H1 (cell line): ENCODE measurements at regions of chr1 and their contacts with region 1.

Region 1: DNA sequence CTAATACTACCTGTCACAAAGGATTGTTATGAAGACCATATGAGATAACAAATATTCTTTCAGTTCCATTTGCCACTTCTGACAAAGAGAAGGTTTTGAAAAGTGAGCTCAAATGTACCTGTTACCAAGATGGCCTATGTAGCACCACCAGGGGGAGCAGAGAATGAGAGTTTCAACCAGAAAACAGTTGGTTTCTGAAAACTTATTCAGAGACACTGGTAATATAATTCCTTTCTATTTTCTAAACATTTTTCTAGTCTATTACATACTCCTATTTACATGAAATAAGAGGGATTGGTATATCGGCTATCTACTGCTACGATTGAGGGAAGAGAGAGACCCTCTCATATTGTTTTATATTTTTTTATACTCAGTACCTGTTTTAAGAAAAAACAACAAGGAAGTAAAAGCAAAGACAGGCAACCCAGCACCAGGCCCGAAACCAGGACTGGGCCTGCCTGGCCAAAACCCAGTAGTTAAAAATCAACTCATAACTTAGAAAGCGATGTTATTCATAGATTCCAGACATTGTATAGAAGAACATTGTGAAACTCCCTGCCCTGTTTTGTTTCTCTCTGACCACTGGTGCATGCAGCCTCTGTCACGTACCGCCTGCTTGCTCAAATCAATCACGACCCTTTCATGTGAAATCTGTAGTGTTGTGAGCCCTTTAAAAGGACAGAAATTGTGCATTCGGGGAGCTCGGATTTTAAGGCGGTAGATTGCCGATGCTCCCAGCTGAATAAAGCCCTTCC is 48.3 kb downstream of the IL23R start:
- DNase-seq: no peak
- H3K4me3 ChIP-seq: no peak overlapping the region
- H3K27ac ChIP-seq: no peak overlapping the region
- H3K4me1 ChIP-seq: peaks cover 0 to 2% (median 0%) of the 10 kb centered on the region in 4 experiments; a peak in 1 of 7 replicates
- H3K27me3 ChIP-seq: no peaks in the 10 kb centered on the region
- CTCF ChIP-seq: peak in 2 of 3 experiments; percentile 64 to 69; a peak in 3 of 4 replicates
- EP300 ChIP-seq: no peak
- POLR2A ChIP-seq: no peak
- RAD21 ChIP-seq: peak; percentile 37 to 61

Region 2: DNA sequence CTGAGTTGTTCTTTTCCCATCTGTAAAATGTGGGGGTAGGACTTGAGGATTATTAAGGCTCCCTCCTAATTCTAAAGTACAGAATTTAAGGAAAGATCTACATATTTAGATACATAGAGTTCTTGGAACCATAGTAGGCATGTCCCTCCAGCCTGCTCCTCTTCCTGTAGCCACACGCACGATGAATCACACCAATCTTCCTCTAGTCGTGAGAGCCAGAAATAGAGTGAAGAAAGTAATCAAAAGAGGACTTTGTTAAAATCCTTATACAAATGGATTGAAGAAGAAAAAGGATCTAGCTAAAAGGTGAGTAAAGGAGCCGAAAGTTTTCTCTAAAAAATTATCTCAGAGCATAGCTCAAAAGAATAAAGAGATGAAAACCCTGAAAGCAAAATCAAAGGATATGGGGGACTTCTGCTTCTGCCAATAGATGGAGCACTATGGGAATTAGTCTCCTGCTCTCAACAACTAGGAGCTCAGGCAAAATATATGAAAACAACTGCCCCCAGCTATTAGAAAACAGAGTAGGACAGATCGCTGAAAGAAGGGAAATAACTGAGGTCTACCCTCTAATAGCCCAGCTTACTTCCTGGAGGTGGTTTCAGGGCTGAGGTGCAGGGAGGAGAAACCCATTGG is 88.4 kb before region 1 on chr1:
- CTCF ChIA-PET with region 1: interaction called, 13 read pairs
- POLR2A ChIA-PET with region 1: no interaction called
- DNase-seq: no peak
- H3K4me3 ChIP-seq: no peak overlapping the region
- H3K27ac ChIP-seq: no peak overlapping the region
- H3K4me1 ChIP-seq: no peaks in the 10 kb centered on the region
- H3K27me3 ChIP-seq: no peaks in the 10 kb centered on the region
- CTCF ChIP-seq: peak in 1 of 3 experiments; percentile 1; a peak in 1 of 4 replicates
- EP300 ChIP-seq: no peak
- POLR2A ChIP-seq: no peak
- RAD21 ChIP-seq: peak; percentile 9 to 18; a peak in 1 of 4 replicates

Region 3: GRCh38 chr1:67194209-67194863 is 20.3 kb before region 1 on chr1:
- CTCF ChIA-PET with region 1: interaction called, 52 read pairs
- POLR2A ChIA-PET with region 1: no interaction called
- DNase-seq: no peak
- H3K4me3 ChIP-seq: no peak overlapping the region
- H3K27ac ChIP-seq: no peak overlapping the region
- H3K4me1 ChIP-seq: no peaks in the 10 kb centered on the region
- H3K27me3 ChIP-seq: no peaks in the 10 kb centered on the region
- CTCF ChIP-seq: no peak
- EP300 ChIP-seq: no peak
- POLR2A ChIP-seq: no peak
- RAD21 ChIP-seq: no peak

Region 4: GRCh38 chr1:67261680-67262079 is 47.1 kb after region 1 on chr1:
- CTCF ChIA-PET with region 1: interaction called, 12 read pairs
- POLR2A ChIA-PET with region 1: no interaction called
- DNase-seq: peak in 1 of 2 experiments; percentile 46
- H3K4me3 ChIP-seq: peak overlapping the region in 1 of 4 experiments; percentile 35; a peak in 1 of 8 replicates
- H3K27ac ChIP-seq: no peak overlapping the region
- H3K4me1 ChIP-seq: peaks cover 0 to 14% (median 8%) of the 10 kb centered on the region in 4 experiments; a peak in 3 of 7 replicates
- H3K27me3 ChIP-seq: no peaks in the 10 kb centered on the region
- CTCF ChIP-seq: peak; percentile 18 to 63 (median 33); a peak in 3 of 4 replicates
- EP300 ChIP-seq: no peak
- POLR2A ChIP-seq: no peak
- RAD21 ChIP-seq: peak in 1 of 2 experiments; percentile 3; a peak in 1 of 4 replicates

Region 5: GRCh38 chr1:67332653-67333529 is 118.3 kb after region 1 on chr1:
- CTCF ChIA-PET with region 1: interaction called, 27 read pairs
- POLR2A ChIA-PET with region 1: no interaction called
- DNase-seq: no peak
- H3K4me3 ChIP-seq: no peak overlapping the region
- H3K27ac ChIP-seq: no peak overlapping the region
- H3K4me1 ChIP-seq: peaks cover 0 to 4% (median 0%) of the 10 kb centered on the region in 4 experiments; a peak in 1 of 7 replicates
- H3K27me3 ChIP-seq: no peaks in the 10 kb centered on the region
- CTCF ChIP-seq: no peak
- EP300 ChIP-seq: no peak
- POLR2A ChIP-seq: no peak
- RAD21 ChIP-seq: no peak

Region 6: DNA sequence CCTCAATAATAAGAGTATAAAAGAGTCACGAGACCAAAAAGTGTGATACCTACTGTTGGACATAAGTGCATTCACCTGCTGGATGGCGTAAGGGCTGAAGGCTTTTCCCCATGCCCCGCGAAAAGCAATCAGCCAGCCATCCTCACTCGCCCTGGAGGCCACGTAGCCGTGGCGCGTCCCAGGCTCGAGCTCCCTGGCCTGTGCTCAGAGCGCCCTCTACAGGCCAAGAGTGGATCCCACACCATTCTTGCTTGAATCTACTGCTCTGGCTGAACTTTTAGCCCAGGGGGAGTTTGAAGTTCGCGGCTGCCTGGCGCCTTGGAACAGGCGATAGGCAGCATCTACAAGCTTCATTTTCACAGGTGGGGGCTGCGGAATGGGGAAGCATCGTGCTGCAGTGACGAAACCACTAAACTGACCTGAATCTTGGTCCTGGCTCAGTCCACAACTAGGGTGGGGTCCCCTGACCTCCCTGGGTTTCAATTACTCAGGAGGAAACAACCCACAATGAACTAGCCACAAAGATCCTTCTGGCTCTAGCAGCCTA is 285.9 kb after region 1 on chr1:
- CTCF ChIA-PET with region 1: interaction called, 161 read pairs
- POLR2A ChIA-PET with region 1: no interaction called
- DNase-seq: peak; percentile 75 to 94
- H3K4me3 ChIP-seq: peak overlapping the region in 3 of 4 experiments; percentile 4 to 32 (median 30); a peak in 4 of 8 replicates
- H3K27ac ChIP-seq: no peak overlapping the region
- H3K4me1 ChIP-seq: peaks cover 0 to 3% (median 1%) of the 10 kb centered on the region in 4 experiments; a peak in 2 of 7 replicates
- H3K27me3 ChIP-seq: peaks cover 0 to 8% (median 7%) of the 10 kb centered on the region in 4 experiments; a peak in 6 of 7 replicates
- CTCF ChIP-seq: peak; percentile 94 to 100 (median 98)
- EP300 ChIP-seq: no peak
- POLR2A ChIP-seq: no peak
- RAD21 ChIP-seq: peak; percentile 100